HEK293 (cell line): ENCODE measurements at regions of chr20 and their contacts with region 1.

Region 1: GRCh38 chr20:3820048-3820900 is at the start of gene AP5S1:
- H3K4me3 ChIP-seq: peak within 1 kb of the TSS; percentile 73
- H3K27ac ChIP-seq: peak within 1 kb of the TSS; percentile 93
- H3K4me1 ChIP-seq: peaks cover 5% of the 10 kb centered on the region; the same call in 1 of the 2 replicates
- CTCF ChIP-seq: peak; percentile 99

Region 2: DNA sequence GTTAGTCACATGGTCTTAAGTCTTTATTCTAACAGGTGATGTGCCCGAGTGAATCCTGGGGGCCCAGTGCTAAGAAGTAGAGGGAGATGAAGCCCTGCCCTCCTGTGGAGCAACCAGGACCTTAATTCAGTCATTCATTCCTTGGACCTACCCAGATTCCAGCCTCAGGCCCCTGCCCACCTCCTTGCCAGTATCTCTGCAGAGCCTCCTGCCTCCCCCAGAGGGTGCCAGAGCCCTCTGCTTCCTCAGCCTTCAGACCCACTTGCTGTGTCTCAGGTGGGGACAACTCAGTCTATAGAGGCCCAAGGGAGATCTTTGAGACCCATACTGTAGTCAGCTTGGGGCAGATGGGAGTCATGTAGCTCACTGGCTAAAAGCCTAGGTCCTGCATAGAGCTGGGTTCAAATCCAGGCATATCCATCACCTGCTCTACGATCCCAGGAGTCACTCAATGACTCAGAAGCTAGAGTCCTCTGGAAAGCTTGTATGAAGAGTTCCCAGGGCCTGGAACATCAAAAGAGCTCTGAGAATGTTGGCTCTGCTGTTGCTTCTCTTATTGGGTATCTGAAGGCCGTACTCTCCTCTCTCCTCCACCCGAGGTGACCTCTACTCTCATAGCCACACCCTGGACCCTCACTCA is 104.0 kb before region 1 on chr20:
- CTCF ChIA-PET with region 1: interaction called, 10 read pairs
- POLR2A ChIA-PET with region 1: no interaction called
- H3K4me3 ChIP-seq: no peak overlapping the region
- H3K27ac ChIP-seq: 0 out of 2 replicates have a peak overlapping the region, but pooled peaks have one; percentile 18
- H3K4me1 ChIP-seq: no peaks in the 10 kb centered on the region
- CTCF ChIP-seq: peak; percentile 59; the same call in 1 of the 2 replicates

Region 3: DNA sequence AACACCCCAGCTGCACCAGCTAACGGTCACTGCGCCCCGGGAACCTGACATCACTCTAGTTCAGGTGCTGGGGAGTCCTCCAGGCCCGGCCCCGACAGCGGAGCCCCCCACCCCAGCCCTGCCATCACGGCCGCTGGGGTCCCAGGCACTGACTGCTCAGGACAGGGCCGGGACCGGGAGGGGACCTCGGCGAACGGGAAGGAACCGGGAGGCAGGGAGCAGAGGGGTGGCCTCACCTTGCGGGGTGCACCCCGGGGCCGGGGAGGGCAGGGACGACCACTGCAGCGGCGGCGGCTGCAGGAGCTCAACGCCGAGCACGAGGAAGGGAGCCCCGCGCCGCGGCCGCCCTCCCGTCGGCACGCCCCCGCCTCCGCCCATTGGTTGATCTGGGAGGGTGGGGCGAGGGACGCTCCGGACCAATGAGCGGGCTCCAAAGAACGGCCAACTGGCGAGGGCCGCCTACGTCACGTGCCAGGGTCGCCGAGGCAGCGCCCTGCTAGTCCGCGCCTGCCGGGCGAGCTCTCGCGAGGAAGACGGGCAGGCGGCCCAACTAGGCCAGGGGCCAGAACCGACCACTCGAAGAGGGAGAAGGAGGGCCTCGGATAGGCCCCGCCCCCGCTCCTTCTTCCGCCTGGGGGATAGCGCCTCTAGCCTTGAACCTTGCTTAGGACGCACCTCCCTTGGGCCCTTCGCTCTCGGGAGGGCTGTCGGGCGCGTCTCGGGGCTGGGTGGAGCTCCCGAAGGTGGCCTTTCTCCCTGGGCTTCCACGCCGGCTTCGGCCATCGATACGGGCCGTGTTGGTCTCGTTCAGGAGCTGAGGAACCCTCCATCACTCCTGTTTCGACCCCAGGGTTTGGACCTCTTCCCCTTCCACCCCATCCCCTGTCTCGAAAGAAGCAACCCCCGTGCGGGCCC is 52.6 kb before region 1 on chr20 and contains the start of gene ADISSP:
- CTCF ChIA-PET with region 1: interaction called, 4 read pairs
- POLR2A ChIA-PET with region 1: interaction called, 20 read pairs
- H3K4me3 ChIP-seq: peak within 1 kb of the TSS; percentile 74
- H3K27ac ChIP-seq: peak within 1 kb of the TSS; percentile 68
- H3K4me1 ChIP-seq: peaks cover 7% of the 10 kb centered on the region
- CTCF ChIP-seq: peak; percentile 44; the same call in 1 of the 2 replicates

Region 4: GRCh38 chr20:3786665-3787323 is 33.5 kb before region 1 on chr20 and contains the start of gene CENPB:
- CTCF ChIA-PET with region 1: interaction called, 142 read pairs
- POLR2A ChIA-PET with region 1: interaction called, 30 read pairs
- H3K4me3 ChIP-seq: peak within 1 kb of the TSS; percentile 49
- H3K27ac ChIP-seq: peak within 1 kb of the TSS; percentile 76; the same call in 1 of the 2 replicates
- H3K4me1 ChIP-seq: peaks cover 17% of the 10 kb centered on the region; the same call in 1 of the 2 replicates
- CTCF ChIP-seq: peak; percentile 42; the same call in 1 of the 2 replicates

Region 5: GRCh38 chr20:3804254-3804751 is 16.0 kb before region 1 on chr20:
- CTCF ChIA-PET with region 1: interaction called, 10 read pairs
- POLR2A ChIA-PET with region 1: interaction called, 7 read pairs
- H3K4me3 ChIP-seq: no peak overlapping the region
- H3K27ac ChIP-seq: no peak overlapping the region
- H3K4me1 ChIP-seq: peaks cover 18% of the 10 kb centered on the region
- CTCF ChIP-seq: no peak

Region 6: DNA sequence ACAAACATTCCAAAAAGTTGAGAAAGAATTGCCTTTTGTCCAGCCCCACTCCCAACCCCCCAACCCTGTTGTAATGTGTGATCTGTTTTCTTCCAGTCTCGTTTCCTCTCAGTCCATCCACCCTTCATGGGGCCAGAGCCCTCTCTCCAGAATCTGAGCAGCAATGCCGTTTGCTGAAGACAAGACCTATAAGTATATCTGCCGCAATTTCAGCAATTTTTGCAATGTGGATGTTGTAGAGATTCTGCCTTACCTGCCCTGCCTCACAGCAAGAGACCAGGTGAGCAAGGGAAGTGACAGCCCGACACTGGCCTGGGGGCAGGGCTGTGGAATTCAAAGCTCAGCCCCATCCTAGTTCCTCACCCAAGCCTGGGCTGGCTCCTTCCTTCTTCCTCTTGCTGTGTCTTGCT is 34.2 kb after region 1 on chr20:
- CTCF ChIA-PET with region 1: interaction called, 13 read pairs
- POLR2A ChIA-PET with region 1: interaction called, 6 read pairs
- H3K4me3 ChIP-seq: no peak overlapping the region
- H3K27ac ChIP-seq: no peak overlapping the region
- H3K4me1 ChIP-seq: no peaks in the 10 kb centered on the region
- CTCF ChIP-seq: no peak